ENCODE measurements at regions of chr3 and their contacts with region 1.

Region 1: DNA sequence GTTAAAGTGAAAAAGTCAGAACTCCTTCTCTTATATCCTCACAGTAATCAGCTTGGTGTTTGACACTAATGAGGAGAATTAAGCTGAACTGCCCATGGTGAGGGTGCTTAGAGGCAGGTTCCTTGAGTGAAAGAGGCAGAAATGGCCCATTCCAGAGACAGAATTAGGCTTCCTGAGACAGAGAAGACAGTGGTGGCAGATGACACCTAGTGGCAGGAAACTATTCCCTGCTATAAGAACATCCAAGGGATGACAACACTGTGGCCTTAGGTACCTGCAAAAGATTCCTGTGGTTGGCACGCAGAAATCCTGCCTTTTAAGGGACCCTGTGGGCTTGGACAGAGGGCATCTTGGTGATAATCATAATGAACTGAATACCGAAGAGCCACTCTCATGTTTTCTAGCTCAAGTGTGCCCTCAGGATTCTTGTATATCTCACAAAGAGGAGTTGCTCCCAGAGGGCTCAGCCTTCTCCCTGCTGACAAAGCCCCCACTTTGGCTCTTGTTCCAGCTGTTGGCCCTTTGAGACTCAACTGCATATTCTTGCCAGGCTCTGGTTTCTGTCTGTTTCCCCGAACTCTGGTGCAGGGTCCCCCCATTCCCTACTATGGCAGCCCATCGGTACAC is 56.0 kb downstream of the KBTBD12 start:
- DNase-seq: peak; percentile 41
- H3K4me3 ChIP-seq: no peak overlapping the region
- H3K27ac ChIP-seq: no peak overlapping the region
- H3K4me1 ChIP-seq: no peaks in the 10 kb centered on the region
- H3K27me3 ChIP-seq: no peaks in the 10 kb centered on the region
- CTCF ChIP-seq: peak; percentile 83 to 87

Region 2: GRCh38 chr3:127574880-127575878 is 395.9 kb before region 1 on chr3:
- CTCF ChIA-PET with region 1: no interaction called
- dilution Hi-C with region 1: no loop called
- in situ Hi-C with region 1: no loop called
- intact Hi-C with region 1: loop called (anchors 1 kb)
- DNase-seq: peak; percentile 82
- H3K4me3 ChIP-seq: no peak overlapping the region
- H3K27ac ChIP-seq: no peak overlapping the region
- H3K4me1 ChIP-seq: peaks cover 3% of the 10 kb centered on the region
- H3K27me3 ChIP-seq: no peaks in the 10 kb centered on the region
- CTCF ChIP-seq: peak; percentile 98 to 99

Region 3: DNA sequence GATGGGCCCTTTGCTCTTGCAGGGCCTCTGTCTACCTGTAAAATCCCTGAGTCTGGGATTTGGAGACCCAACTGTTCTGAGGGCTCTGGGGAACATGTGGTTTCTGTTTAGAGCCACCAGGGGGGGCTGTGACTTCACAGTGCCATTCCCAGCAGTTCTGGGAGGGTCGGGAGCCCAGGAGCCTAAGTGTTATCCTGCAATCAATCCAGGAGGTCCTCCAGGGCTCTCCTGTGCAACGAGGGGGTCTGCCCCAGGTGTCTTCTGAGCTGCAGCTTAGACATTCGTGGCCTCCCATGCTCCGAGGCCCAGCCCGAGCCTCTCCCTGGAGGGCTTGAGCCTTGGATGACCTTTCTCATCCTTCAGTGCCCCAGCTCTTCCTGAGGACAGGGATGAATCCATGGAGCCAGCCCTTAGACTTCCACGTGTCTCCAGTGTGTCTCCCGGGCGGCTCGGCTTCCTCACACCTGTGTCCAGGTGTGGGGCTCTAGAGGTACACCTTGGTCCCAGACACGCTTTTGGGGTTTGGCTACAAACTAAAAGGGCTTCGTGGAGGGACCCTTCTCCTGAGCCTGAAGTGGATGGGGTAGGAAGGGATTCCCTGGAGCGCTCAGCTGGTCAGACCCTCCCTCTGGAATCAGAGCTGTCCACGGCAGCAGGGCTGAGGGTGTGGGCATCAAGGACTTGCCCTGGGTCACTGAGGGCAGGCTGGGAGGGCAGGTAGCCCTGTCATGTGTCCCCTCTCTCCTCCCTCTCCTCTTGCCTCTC is 318.7 kb before region 1 on chr3:
- CTCF ChIA-PET with region 1: no interaction called
- dilution Hi-C with region 1: no loop called
- in situ Hi-C with region 1: loop called in 1 of 2 experiments (anchors 10 kb)
- intact Hi-C with region 1: loop called (anchors 1 kb)
- DNase-seq: no peak
- H3K4me3 ChIP-seq: no peak overlapping the region
- H3K27ac ChIP-seq: no peak overlapping the region
- H3K4me1 ChIP-seq: no peaks in the 10 kb centered on the region
- H3K27me3 ChIP-seq: no peaks in the 10 kb centered on the region
- CTCF ChIP-seq: peak; percentile 69 to 91

Region 4: DNA sequence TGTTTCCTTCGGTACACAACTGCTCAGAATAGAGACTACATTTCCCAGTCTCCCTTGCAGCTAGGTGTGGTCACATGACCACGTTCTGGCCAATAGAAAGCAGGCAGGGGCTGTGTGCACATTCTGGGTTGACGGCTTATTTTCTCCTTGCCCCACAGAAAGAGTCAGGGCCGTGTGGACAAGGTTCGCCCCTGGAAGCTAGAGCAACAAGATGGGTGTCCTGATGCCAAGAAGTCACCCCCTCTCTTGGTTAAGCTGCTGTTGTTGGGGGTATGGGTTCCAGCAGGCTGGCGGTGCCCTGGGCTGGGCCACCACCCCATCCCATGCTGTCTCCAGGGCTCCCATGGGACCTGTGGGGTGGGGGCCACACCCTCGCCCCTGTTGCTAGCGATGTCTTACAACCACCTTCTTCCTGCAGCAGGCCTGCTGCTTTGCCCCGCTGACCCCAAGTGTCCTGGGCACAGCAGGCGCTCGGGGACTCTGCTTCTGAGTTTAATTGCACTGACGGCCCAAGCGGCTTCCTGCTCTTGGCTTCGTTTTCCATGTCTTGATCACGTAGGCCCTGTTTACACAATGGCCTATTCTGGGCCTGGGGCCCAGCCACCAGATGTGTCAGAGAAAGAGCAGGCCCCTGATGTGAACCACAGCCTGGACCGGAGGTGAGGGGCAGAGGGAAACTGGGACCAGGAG is 273.4 kb before region 1 on chr3:
- CTCF ChIA-PET with region 1: interaction called, 9 read pairs
- dilution Hi-C with region 1: no loop called
- in situ Hi-C with region 1: loop called in 1 of 2 experiments (anchors 25 kb)
- intact Hi-C with region 1: loop called (anchors 1 kb)
- DNase-seq: peak; percentile 33
- H3K4me3 ChIP-seq: no peak overlapping the region
- H3K27ac ChIP-seq: no peak overlapping the region
- H3K4me1 ChIP-seq: peaks cover 7% of the 10 kb centered on the region
- H3K27me3 ChIP-seq: no peaks in the 10 kb centered on the region
- CTCF ChIP-seq: no peak

Region 5: DNA sequence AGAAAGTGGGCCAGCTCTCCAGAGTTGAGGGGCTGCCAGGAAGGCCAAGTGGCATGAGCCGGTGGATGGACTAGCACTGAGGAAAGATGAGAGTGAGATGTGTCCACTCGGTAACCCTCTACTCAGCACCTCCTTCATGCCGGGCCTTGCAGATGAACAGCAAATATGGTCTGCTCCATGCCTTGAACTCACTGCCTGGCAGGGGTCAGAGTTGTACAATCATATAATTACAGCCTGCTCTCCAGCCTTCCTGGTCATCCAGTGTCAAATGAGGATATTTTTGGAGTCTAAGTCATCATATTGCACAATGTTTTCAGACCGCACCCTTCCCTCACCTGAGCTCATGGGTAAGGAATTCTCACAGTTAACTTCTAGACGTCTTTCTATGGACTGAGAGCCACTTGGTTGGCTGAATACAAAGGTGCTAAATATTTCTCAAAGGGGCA is 153.7 kb before region 1 on chr3:
- CTCF ChIA-PET with region 1: no interaction called
- dilution Hi-C with region 1: no loop called
- in situ Hi-C with region 1: no loop called
- intact Hi-C with region 1: loop called (anchors 2 kb)
- DNase-seq: peak; percentile 93
- H3K4me3 ChIP-seq: no peak overlapping the region
- H3K27ac ChIP-seq: peak overlapping the region; percentile 80
- H3K4me1 ChIP-seq: peaks cover 42% of the 10 kb centered on the region
- H3K27me3 ChIP-seq: no peaks in the 10 kb centered on the region
- CTCF ChIP-seq: no peak

Region 6: GRCh38 chr3:128001576-128001975 is 30.5 kb after region 1 on chr3:
- CTCF ChIA-PET with region 1: no interaction called
- dilution Hi-C with region 1: loop called (anchors 5 kb)
- in situ Hi-C with region 1: no loop called
- intact Hi-C with region 1: no loop called
- DNase-seq: no peak
- H3K4me3 ChIP-seq: no peak overlapping the region
- H3K27ac ChIP-seq: no peak overlapping the region
- H3K4me1 ChIP-seq: peaks cover 1% of the 10 kb centered on the region
- H3K27me3 ChIP-seq: no peaks in the 10 kb centered on the region
- CTCF ChIP-seq: no peak

Region 7: DNA sequence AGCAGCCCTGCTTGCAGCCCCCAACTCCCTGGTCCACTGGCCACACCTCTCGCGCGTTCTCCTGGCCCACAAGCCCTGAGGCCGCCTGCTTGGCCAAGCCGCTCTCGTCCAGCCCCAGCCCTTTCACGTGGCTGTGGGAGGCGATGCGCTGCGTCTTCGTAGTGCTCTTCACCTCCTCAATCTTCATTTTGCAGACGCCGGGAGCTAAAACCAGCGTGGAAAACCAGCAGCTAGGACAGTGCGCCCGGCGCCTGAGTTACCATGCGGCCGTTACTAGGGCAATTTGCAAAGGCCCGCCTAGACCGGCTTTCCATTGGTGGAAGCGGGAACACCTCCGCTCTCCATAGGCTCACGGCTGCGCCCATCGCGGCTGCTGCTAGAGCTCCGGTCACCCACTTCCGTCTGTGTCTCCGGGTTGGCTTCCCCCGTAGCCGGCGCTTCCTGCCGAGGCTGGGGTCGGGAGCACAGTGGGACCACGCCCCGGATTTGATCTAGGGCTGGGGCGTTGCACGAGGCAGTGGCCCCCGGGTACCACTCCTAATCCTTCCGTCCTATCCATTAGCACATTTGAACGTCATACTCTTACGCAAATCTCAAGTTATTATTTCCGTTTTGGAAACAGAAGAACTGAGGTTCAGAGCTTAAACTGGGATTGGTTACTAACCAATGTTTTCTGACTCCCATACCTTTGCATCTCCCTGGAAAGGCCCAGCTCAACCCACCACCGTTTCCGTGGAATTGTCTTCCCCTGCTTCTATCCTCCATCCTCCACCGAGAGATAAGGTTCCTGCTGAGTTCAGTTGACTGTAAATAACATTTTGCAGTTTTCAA is 152.7 kb after region 1 on chr3 and contains the start of gene RUVBL1:
- CTCF ChIA-PET with region 1: no interaction called
- dilution Hi-C with region 1: no loop called
- in situ Hi-C with region 1: no loop called
- intact Hi-C with region 1: no loop called
- DNase-seq: peak; percentile 97
- H3K4me3 ChIP-seq: peak within 1 kb of the TSS; percentile 98 to 100 (median 98)
- H3K27ac ChIP-seq: peak within 1 kb of the TSS; percentile 88
- H3K4me1 ChIP-seq: peaks cover 11% of the 10 kb centered on the region
- H3K27me3 ChIP-seq: no peaks in the 10 kb centered on the region
- CTCF ChIP-seq: no peak
- total RNA-seq, gene RUVBL1: 53.7 to 78.8 TPM